AG04450 (cell line): ENCODE measurements at regions of chr19 and their contacts with region 1.

Region 1: DNA sequence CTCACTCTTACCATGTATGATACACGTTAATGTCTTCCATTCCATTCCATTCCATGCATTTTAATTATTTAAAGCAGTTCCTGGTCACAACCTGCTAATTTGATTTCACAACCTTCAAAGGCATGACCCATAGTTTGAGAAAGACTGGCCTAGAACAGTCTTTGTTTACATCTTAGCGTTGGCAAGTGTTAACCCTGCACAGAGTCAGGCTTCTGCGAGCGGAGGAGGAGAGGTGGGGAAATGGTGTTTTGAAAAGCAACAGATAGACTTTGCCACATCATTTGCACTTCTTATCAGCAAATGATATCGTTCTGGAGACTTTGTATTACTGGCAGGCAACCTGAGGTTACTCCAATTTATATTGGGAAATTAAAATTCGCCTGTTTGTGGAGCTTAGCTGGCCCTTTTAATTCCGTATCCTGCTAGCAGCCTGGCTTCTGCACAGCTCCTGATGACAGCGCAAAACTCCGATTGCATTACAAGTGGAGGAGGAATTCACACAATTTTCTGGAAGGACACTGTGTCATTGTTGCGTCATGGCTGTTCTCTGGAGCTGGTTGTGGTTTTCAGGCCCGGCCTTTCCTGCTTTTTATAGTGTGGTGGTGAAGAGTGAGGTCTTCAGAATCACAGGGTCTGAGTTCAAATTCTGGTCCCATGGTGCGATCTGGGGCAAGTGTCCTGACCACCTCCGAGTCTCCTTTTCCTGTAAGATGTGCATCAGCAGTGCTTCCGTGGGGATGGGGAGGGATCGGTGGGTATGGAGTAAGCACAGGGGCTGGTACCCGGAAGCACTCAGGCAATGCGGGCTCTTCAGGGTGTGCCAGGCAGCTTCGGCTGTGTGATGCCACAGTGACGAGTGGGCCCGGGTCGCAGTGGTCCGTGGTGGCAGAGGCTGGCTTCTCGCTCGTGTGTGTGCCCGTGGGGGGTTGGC is 49.1 kb upstream of the EHD2 start:
- DNase-seq: peak; percentile 91
- H3K4me3 ChIP-seq: peak overlapping the region; percentile 37
- H3K27ac ChIP-seq: peak overlapping the region; percentile 100
- H3K27me3 ChIP-seq: no peaks in the 10 kb centered on the region
- CTCF ChIP-seq: no peak

Region 2: DNA sequence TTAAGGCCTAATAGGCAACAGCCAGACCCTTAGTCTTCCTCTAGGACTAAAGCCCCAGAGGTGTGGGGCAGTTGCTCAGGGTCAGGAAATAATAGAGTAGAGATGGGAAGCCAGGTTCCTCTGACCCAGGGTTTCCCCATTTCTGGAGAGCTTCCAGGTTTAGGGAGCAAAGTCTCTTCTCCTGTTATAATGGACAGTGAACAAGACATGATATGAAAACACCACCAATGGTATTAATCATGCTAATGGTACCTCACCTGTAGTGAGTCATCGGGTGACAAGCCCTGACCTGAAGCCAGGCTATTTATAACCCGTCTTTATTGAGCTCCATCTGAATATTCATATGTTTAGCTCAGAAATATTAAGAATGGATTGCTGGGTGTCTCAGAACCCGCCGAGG is 30.6 kb before region 1 on chr19:
- CTCF ChIA-PET with region 1: no interaction called
- POLR2A ChIA-PET with region 1: interaction called, 12 read pairs
- DNase-seq: no peak
- H3K4me3 ChIP-seq: no peak overlapping the region
- H3K27ac ChIP-seq: no peak overlapping the region
- H3K27me3 ChIP-seq: no peaks in the 10 kb centered on the region
- CTCF ChIP-seq: no peak

Region 3: GRCh38 chr19:47644762-47645482 is 19.2 kb before region 1 on chr19:
- CTCF ChIA-PET with region 1: no interaction called
- POLR2A ChIA-PET with region 1: no interaction called
- DNase-seq: no peak
- H3K4me3 ChIP-seq: no peak overlapping the region
- H3K27ac ChIP-seq: no peak overlapping the region
- H3K27me3 ChIP-seq: no peaks in the 10 kb centered on the region
- CTCF ChIP-seq: no peak